Panc1 (cell line): ENCODE measurements at regions of chr7 and their contacts with region 1.

Region 1: DNA sequence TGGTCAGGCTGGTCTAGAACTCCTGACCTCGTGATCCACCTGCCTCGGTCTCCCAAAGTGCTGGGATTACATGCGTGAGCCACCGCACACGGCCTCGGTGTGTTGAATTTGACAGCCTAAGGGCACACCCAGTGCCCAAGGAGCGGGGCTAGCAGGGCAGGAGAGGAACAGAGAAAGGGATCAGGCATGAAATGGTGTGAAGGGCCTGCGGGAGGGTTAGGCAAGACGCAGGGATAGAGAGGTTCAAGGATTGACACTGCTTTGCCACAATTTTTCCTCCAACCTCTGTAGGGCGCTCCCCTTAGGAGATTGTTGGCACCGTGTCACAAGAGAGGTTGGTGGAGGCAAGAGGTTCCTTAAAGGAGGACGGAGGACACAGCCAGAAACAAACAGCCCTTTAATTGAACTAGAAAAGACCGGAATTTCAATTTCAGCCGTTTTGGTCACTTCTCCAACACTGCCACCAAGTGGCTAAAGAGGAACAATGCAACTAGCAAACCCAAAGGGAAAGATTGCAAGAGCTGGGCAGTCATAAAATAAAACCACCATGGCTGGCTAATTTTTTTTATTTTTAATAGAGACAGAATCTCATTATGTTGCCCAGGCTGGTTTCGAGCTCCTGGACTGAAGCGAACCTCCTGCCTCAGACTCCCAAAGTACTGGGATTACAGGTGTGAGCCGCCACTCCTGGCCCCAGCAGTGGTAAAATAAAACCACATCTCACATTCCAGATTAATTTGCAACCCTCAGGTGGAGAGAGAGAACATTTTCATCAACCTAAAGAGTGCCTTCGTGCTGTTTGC is 6.9 kb upstream of the CREB3L2 start:
- DNase-seq: peak; percentile 68
- ATAC-seq: peak; percentile 77
- H3K4me3 ChIP-seq: peak overlapping the region in 1 of 2 experiments; percentile 21; a peak in 1 of 4 replicates
- H3K27ac ChIP-seq: no peak overlapping the region
- H3K4me1 ChIP-seq: no peaks in the 10 kb centered on the region
- H3K27me3 ChIP-seq: no peaks in the 10 kb centered on the region
- CTCF ChIP-seq: peak; percentile 87

Region 2: DNA sequence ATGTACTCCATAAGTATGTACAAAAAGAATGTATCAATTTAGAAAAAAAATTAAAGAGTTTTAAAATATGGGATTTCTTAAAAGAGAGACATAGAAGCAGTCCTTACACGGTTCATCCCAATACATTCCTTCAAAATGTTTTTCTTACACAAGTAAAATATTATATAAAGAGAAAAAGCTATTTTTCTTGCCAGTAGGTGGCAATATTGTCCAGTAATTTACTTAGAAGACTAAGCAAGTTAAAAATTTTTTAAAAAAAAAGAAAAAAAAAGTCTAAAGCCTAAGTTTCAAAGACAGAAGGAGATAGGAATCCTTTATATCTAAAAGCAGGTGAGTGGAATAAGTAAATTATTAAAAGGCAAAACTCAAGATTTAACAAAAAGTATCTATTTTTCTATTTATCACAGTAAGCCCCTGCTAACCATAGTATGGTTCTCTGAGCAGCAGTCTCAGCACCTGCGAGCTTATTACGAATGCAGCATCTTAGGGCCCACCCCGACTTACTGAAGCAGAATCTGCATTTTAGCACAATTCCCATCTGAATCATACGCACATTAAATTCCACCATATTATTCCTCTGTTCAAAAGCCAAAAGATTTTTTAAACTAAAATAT is 402.6 kb before region 1 on chr7:
- CTCF ChIA-PET with region 1: no interaction called
- POLR2A ChIA-PET with region 1: no interaction called
- in situ Hi-C with region 1: no loop called
- intact Hi-C with region 1: loop called (anchors 5 kb)
- DNase-seq: peak; percentile 41
- ATAC-seq: no peak
- H3K4me3 ChIP-seq: no peak overlapping the region
- H3K27ac ChIP-seq: no peak overlapping the region
- H3K4me1 ChIP-seq: no peaks in the 10 kb centered on the region
- H3K27me3 ChIP-seq: peaks cover 30% of the 10 kb centered on the region
- CTCF ChIP-seq: peak; percentile 36; the same call in 1 of the 2 replicates

Region 3: DNA sequence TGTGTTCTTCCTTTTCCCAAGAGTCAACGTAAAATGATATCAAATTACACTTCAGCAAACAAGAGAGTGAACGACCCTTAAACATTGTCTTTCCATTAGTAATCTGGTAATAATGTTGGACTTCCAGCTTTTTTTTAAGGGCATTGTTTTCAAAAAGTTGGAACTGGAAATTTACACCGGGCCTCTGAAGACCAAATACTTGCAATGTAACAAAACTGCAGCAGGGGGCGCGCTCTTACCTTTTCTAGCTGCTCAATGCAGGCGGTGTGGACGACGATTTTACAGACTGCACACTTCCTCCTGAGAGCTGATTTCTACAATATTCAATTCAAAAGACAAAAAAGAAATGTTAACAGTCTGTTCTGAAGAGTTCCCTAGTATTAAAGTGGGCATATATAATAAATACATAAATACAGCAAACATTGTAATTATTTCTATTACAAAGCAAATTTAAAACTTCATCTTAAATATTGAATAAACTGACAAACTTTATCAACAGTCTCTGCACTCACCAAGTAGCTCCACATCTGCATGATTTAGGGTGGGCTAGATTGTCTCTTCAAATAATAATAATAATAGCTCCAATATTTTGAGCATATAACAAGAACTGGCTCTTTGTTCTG is 352.4 kb before region 1 on chr7:
- CTCF ChIA-PET with region 1: no interaction called
- POLR2A ChIA-PET with region 1: no interaction called
- in situ Hi-C with region 1: no loop called
- intact Hi-C with region 1: loop called (anchors 5 kb)
- DNase-seq: no peak
- ATAC-seq: peak; percentile 85
- H3K4me3 ChIP-seq: no peak overlapping the region
- H3K27ac ChIP-seq: no peak overlapping the region
- H3K4me1 ChIP-seq: no peaks in the 10 kb centered on the region
- H3K27me3 ChIP-seq: peaks cover 12% of the 10 kb centered on the region
- CTCF ChIP-seq: peak; percentile 91